Sigmoid colon (tissue), 7 donors: ENCODE measurements at regions of chr10 and their contacts with region 1.

Region 1: DNA sequence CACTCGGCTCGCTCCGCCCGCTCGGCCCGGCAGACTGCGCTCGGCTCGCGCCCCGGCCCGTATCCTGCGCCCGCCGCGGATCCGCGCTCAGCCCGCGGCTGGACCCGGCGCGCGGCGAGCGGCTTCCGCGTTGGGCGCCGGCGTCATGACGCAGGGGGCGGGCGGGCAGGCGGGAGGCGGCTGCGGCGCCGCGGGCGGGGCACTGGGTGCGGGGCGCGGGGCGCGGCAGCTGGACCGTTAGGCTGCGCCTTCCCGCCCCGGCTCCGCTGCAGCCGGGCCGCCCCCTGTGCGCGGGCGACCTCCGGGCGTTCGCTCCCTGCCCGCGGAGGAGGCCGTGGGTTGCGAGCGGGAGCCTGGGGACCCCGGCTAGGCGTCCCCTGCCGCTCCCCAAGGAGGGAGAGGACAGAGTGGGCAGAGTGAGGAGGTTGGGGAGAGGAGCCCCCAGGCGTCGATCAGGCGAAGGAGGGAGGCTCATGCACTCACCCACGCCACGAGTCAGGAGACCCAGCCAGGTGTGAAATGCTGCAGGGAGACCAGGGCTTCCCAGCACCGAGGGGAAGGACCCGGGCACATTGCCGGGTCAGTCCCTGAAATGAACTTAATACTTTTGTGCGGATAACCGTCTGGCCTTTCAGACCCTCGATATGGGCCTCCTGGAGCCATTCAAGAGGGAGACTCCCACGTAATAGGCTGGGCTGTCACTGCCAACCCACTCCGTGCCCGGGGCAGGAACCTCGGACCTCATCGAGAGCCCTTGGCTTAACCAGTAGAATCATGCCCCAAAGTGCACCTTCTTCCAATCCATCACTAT is at the start of gene PIP4K2A:
- DNase-seq: peak; percentile 84
- H3K4me3 ChIP-seq: peak within 1 kb of the TSS; percentile 61 to 99 (median 90)
- H3K27ac ChIP-seq: peak within 1 kb of the TSS; percentile 86 to 91 (median 88)
- H3K4me1 ChIP-seq: peaks cover 0 to 36% (median 18%) of the 10 kb centered on the region in 4 donors
- H3K27me3 ChIP-seq: no peaks in the 10 kb centered on the region
- CTCF ChIP-seq: no peak
- EP300 ChIP-seq: no peak
- POLR2A ChIP-seq: no peak
- total RNA-seq, gene PIP4K2A: 16.6 to 23.2 (median 20.4) TPM

Region 2: GRCh38 chr10:21934307-21934706 is 780.4 kb before region 1 on chr10:
- intact Hi-C with region 1: no loop called
- DNase-seq: no peak
- H3K4me3 ChIP-seq: no peak overlapping the region
- H3K27ac ChIP-seq: no peak overlapping the region
- H3K4me1 ChIP-seq: no peaks in the 10 kb centered on the region
- H3K27me3 ChIP-seq: no peaks in the 10 kb centered on the region
- CTCF ChIP-seq: no peak
- EP300 ChIP-seq: no peak
- POLR2A ChIP-seq: no peak

Region 3: DNA sequence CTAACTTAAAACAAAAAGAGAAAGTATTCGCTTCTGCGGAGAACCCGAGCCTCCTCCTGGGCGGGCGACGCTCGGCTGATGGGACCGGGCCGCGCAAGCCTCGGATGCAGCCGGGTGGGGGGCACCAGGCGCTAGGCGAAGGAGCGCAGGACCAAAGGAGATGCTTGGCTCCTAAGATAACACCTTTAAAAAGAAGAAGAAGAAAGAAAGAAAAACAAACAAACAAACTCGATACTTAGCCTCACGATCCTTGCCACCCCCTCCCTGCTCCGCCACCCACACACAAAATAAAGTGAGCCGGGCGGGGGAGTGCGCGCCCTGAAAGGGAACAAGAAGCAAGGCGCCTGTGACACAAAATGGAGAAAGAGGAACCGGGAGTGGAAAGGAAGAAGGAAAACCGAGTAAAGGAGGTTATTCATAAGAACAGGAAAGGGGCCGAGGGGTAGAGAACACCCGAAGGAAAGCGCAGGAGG is 462.9 kb before region 1 on chr10:
- intact Hi-C with region 1: loop called (anchors 10 kb)
- DNase-seq: peak; percentile 79
- H3K4me3 ChIP-seq: peak overlapping the region; percentile 61 to 86 (median 74)
- H3K27ac ChIP-seq: peak overlapping the region; percentile 94 to 97 (median 96)
- H3K4me1 ChIP-seq: peaks cover 0 to 10% (median 5%) of the 10 kb centered on the region in 4 donors
- H3K27me3 ChIP-seq: no peaks in the 10 kb centered on the region
- CTCF ChIP-seq: no peak
- EP300 ChIP-seq: no peak
- POLR2A ChIP-seq: no peak

Region 4: DNA sequence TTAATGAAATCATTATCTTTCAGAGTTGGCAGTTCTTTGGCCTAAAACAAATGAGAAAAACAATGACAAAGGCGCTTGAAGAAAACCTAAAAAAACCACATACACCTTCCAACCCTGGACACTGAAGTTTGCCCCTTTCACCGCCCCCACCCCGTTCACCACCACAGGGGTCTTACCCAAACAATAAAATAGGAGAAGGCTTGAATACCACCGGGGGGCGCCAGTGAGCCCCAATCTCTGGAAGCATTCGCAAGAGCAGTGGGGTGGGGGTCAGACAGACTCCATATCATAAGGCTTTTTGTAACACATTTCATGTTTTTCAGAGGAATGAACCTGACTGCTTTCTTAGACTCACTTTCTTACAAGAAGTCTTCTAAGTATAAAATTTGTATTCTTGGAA is 164.0 kb before region 1 on chr10:
- intact Hi-C with region 1: loop called (anchors 5 kb)
- DNase-seq: no peak
- H3K4me3 ChIP-seq: no peak overlapping the region
- H3K27ac ChIP-seq: no peak overlapping the region
- H3K4me1 ChIP-seq: peaks cover 0 to 14% (median 6%) of the 10 kb centered on the region in 4 donors
- H3K27me3 ChIP-seq: no peaks in the 10 kb centered on the region
- CTCF ChIP-seq: peak in 3 of 4 experiments; percentile 10 to 45 (median 28)
- EP300 ChIP-seq: no peak
- POLR2A ChIP-seq: no peak

Region 5: DNA sequence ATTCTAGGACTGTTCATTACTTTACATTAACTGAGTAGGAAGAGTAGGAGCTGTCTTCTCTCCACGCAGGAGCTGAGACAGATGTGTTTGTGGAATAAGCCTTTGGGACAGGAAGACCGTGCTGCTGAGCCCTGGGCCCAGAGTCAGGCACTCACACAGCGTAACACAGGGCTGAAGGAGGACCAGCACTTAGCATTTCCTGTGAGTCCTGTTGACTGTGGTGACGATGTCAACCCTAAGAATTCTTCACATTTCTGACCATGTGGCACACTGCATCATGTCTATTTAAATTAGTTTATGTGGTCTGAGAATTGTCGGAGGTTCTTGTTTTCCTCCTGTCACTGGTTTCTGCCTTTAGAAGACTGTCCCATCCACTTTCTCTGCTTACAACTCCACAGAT is 117.5 kb before region 1 on chr10:
- intact Hi-C with region 1: no loop called
- DNase-seq: no peak
- H3K4me3 ChIP-seq: no peak overlapping the region
- H3K27ac ChIP-seq: no peak overlapping the region
- H3K4me1 ChIP-seq: peaks cover 0 to 7% (median 3%) of the 10 kb centered on the region in 4 donors
- H3K27me3 ChIP-seq: no peaks in the 10 kb centered on the region
- CTCF ChIP-seq: no peak
- EP300 ChIP-seq: no peak
- POLR2A ChIP-seq: no peak

Region 6: GRCh38 chr10:22805283-22805682 is 90.6 kb after region 1 on chr10:
- intact Hi-C with region 1: loop called (anchors 5 kb)
- DNase-seq: no peak
- H3K4me3 ChIP-seq: no peak overlapping the region
- H3K27ac ChIP-seq: no peak overlapping the region
- H3K4me1 ChIP-seq: peaks cover 0 to 39% (median 25%) of the 10 kb centered on the region in 4 donors
- H3K27me3 ChIP-seq: no peaks in the 10 kb centered on the region
- CTCF ChIP-seq: no peak
- EP300 ChIP-seq: no peak
- POLR2A ChIP-seq: no peak

Region 7: DNA sequence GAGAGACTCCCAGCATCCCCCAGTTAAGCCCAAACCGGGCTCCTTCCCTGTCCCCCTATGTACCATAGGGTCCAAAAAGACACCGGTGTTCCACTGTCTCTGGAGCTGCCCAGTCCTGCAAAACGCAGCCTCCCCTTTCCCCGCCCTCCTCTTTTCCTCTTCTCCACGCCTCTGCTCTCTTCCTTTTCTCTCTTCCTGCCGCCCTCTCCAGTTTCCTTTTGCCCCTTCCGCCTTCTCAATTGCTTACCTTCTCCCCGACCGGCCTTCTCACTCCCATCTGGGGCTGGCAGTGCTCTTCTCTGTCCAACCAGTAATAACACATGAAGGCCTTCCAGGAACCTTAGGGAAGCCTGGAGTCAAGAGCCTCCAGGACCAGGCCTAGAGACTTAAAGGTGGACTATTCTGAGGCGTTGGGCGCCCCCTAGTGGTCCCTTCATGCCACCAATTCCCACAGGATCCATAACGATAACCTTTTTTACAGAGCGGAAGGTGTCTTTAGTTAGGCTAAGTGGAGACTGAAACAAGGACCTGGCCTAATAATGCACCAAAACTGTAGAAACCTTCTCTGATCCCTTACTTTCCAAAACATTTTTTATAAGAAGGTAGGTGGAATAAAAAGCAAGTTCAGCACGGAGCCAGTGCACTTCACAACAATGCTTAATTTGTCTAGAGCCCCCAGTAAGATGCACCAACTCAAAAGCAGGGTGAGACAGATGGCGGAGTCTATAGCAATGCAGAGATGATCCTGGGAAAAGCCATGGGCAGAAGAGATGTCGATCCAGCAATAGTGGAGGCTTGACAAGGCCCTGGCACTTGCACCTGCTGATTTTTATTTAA is 353.5 kb after region 1 on chr10:
- intact Hi-C with region 1: loop called (anchors 10 kb)
- DNase-seq: peak; percentile 90
- H3K4me3 ChIP-seq: no peak overlapping the region
- H3K27ac ChIP-seq: peak overlapping the region in 1 of 4 donors; percentile 29
- H3K4me1 ChIP-seq: peaks cover 0 to 36% (median 30%) of the 10 kb centered on the region in 4 donors
- H3K27me3 ChIP-seq: no peaks in the 10 kb centered on the region
- CTCF ChIP-seq: peak; percentile 26 to 82 (median 60)
- EP300 ChIP-seq: no peak
- POLR2A ChIP-seq: no peak